CD14-positive monocyte (primary cell): ENCODE measurements at regions of chr1 and their contacts with region 1.

Region 1: DNA sequence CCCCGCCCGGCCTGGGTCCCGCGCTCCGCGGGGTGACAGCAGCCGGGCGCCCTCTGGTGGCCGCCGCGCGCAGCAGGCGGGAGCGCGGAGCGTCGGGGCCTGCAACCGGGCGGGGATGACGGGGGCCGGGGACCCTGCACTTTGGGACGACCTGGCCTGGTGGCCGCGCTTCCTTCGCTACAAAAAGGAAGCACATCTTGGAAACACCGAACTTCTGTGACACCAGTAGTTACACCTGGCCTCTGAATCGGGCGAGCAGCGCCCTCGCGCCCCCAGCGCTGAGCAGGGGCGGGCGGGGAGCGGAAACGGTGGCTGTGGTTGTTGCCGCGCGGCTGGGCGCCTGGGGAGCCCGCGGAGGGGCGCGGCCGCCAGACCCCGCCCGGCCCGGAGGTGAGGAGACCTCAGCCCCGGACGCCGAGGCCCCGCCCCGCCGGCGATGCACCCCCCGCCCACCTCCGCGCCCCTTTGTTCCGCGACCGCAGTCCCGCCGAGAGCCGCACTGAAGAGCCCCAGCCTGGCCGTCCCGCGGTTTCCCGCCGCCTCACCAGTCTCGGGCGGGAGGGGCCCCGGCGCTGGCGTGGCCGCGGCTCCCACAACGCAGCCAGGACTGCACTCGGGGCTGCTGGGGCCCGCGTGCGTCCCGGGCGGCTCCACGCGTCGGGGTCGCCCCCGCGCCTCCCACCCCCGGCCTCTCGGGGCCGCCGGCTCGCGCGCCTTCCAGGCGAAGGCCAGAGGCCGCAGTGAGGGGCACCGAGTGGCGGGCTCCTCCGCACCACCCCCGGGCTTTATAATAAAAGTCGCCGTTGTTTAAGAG is 59.3 kb downstream of the H3-3A start:
- DNase-seq: peak; percentile 45 to 68 (median 52)
- H3K4me3 ChIP-seq: peak overlapping the region; percentile 35 to 78 (median 40)
- H3K4me3 Mint-ChIP-seq: peak overlapping the region; percentile 76 to 83
- H3K27ac ChIP-seq: no peak overlapping the region
- H3K27ac Mint-ChIP-seq: no peak overlapping the region
- H3K4me1 ChIP-seq: peaks cover 9 to 21% of the 10 kb centered on the region in 2 donors
- H3K4me1 Mint-ChIP-seq: peaks cover 20% of the 10 kb centered on the region
- H3K27me3 ChIP-seq: peaks cover 0 to 24% of the 10 kb centered on the region in 2 donors
- H3K27me3 Mint-ChIP-seq: peaks cover 19 to 30% (median 28%) of the 10 kb centered on the region in 3 donors
- CTCF ChIP-seq: peak; percentile 94

Region 2: GRCh38 chr1:225999227-225999911 is 122.4 kb before region 1 on chr1 and contains the start of gene SDE2:
- intact Hi-C with region 1: loop called (anchors 5 kb)
- DNase-seq: peak; percentile 99 to 100 (median 99)
- H3K4me3 ChIP-seq: peak within 1 kb of the TSS; percentile 69 to 95 (median 87)
- H3K4me3 Mint-ChIP-seq: peak within 1 kb of the TSS; percentile 100
- H3K27ac ChIP-seq: peak within 1 kb of the TSS; percentile 97 to 98
- H3K27ac Mint-ChIP-seq: peak within 1 kb of the TSS; percentile 99 to 100 (median 100)
- H3K4me1 ChIP-seq: peaks cover 48 to 62% of the 10 kb centered on the region in 2 donors
- H3K4me1 Mint-ChIP-seq: peaks cover 69% of the 10 kb centered on the region
- H3K27me3 ChIP-seq: no peaks in the 10 kb centered on the region
- H3K27me3 Mint-ChIP-seq: peaks cover 0 to 5% (median 2%) of the 10 kb centered on the region in 3 donors
- CTCF ChIP-seq: no peak
- polyA plus RNA-seq, gene SDE2: 6.8 to 18.0 (median 8.4) TPM

Region 3: DNA sequence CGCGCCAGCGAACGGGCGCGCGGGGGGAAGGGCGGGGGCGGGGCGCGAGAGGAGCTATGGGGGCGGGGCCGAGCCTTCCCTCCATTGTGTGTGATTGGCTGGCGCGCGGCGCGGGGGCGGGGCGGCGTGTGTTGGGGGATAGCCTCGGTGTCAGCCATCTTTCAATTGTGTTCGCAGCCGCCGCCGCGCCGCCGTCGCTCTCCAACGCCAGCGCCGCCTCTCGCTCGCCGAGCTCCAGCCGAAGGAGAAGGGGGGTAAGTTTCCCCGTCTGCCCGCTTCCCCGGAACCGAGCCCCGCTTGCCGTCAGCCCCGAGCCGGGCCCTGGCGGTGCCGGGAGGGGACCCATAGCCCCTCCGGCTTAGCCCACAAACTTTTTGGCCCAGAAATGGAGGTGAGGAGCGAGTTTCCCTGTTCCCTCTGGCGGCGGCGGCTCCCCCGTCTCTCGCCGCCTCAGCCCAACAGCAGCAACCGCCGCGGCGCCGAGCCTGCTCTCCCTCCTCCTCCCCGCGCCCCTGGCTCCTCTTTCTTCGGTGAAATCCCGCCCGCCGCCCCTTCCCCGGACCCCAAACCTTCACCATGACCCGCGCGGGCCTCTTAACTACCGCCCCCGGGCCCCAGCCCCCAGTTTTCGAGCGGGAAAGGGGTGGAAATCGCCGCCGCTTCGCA is 59.1 kb before region 1 on chr1 and contains the start of gene H3-3A:
- intact Hi-C with region 1: loop called in 1 of 2 experiments (anchors 5 kb)
- DNase-seq: peak; percentile 94 to 96 (median 94)
- H3K4me3 ChIP-seq: peak within 1 kb of the TSS; percentile 89 to 98 (median 90)
- H3K4me3 Mint-ChIP-seq: peak within 1 kb of the TSS; percentile 100
- H3K27ac ChIP-seq: peak within 1 kb of the TSS; percentile 92 to 99
- H3K27ac Mint-ChIP-seq: peak within 1 kb of the TSS; percentile 98 to 100 (median 99)
- H3K4me1 ChIP-seq: peaks cover 34 to 49% of the 10 kb centered on the region in 2 donors
- H3K4me1 Mint-ChIP-seq: peaks cover 43% of the 10 kb centered on the region
- H3K27me3 ChIP-seq: no peaks in the 10 kb centered on the region
- H3K27me3 Mint-ChIP-seq: no peaks in the 10 kb centered on the region
- CTCF ChIP-seq: no peak
- polyA plus RNA-seq, gene H3-3A: 961 to 1,826 (median 1,812) TPM

Region 4: GRCh38 chr1:226083302-226084101 is 38.3 kb before region 1 on chr1:
- intact Hi-C with region 1: loop called in 1 of 2 experiments (anchors 5 kb)
- DNase-seq: peak; percentile 66 to 79 (median 78)
- H3K4me3 ChIP-seq: peak overlapping the region; percentile 42 to 81 (median 60)
- H3K4me3 Mint-ChIP-seq: peak overlapping the region; percentile 96 to 97
- H3K27ac ChIP-seq: no peak overlapping the region
- H3K27ac Mint-ChIP-seq: peak overlapping the region in 6 of 7 donors; percentile 56 to 88 (median 78)
- H3K4me1 ChIP-seq: peaks cover 11 to 17% of the 10 kb centered on the region in 2 donors
- H3K4me1 Mint-ChIP-seq: peaks cover 8% of the 10 kb centered on the region
- H3K27me3 ChIP-seq: peaks cover 0 to 6% of the 10 kb centered on the region in 2 donors
- H3K27me3 Mint-ChIP-seq: peaks cover 10 to 31% (median 17%) of the 10 kb centered on the region in 3 donors
- CTCF ChIP-seq: no peak

Region 5: DNA sequence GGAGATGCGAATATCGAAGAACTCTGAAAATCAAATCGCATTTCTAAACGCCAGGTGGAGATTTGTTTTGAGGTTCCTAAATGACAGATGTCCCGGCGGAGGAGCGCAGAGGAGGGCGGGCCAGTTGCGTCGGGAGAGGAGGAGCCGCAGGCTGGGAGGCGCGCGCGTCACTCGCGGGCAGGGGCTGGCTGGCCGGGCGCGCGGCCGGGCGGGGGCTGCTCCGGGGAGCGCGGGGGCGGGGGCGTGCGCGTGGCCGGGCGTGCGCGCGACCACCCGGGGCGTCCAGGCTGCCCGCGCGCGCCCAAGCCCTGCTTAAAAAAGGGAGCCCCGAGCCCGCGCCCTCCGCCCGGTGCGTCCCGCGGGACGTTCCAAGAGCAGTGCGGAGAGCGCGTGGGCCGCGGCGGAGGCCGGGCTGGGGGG is 12.0 kb before region 1 on chr1:
- intact Hi-C with region 1: loop called in 1 of 2 experiments (anchors 2 kb)
- DNase-seq: peak; percentile 56 to 70 (median 68)
- H3K4me3 ChIP-seq: peak overlapping the region; percentile 49 to 83 (median 71)
- H3K4me3 Mint-ChIP-seq: peak overlapping the region; percentile 98 to 99
- H3K27ac ChIP-seq: peak overlapping the region in 1 of 2 donors; percentile 68
- H3K27ac Mint-ChIP-seq: peak overlapping the region; percentile 31 to 88 (median 81)
- H3K4me1 ChIP-seq: peaks cover 15 to 22% of the 10 kb centered on the region in 2 donors
- H3K4me1 Mint-ChIP-seq: peaks cover 17% of the 10 kb centered on the region
- H3K27me3 ChIP-seq: no peaks in the 10 kb centered on the region
- H3K27me3 Mint-ChIP-seq: peaks cover 2 to 5% (median 4%) of the 10 kb centered on the region in 3 donors
- CTCF ChIP-seq: no peak

Region 6: DNA sequence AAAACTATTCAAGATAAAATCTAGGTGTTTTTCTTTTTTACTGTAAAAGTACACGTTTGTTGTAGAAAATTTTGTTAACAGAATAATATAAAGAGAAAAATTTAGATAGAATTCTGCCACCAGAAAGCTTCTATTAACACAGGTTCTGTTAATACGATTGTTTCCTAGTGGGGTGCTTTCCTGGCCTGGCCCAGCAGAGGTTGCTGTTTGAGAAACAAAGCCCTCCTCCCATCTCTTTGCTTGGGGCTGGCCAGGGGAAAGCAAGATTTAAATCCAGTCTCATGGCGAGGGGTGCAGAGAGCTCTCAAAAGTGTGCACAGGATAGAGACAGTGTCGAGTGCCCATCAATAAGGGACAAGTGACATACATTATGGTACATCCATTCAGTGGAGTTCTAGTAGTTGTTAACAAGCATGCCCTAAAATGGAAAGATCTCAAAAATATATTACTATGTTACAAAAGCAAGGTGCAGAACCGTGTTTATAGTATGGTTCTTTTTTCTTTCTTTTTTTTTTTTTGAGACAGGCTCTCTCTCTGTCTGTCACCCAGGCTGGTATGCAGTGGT is 79.3 kb after region 1 on chr1:
- intact Hi-C with region 1: loop called (anchors 1 to 2 kb)
- DNase-seq: no peak
- H3K4me3 ChIP-seq: no peak overlapping the region
- H3K4me3 Mint-ChIP-seq: no peak overlapping the region
- H3K27ac ChIP-seq: no peak overlapping the region
- H3K27ac Mint-ChIP-seq: no peak overlapping the region
- H3K4me1 ChIP-seq: peaks cover 6 to 8% of the 10 kb centered on the region in 2 donors
- H3K4me1 Mint-ChIP-seq: peaks cover 8% of the 10 kb centered on the region
- H3K27me3 ChIP-seq: no peaks in the 10 kb centered on the region
- H3K27me3 Mint-ChIP-seq: peaks cover 2% of the 10 kb centered on the region in 3 donors
- CTCF ChIP-seq: no peak